A673 (cell line): ENCODE measurements at regions of chr2 and their contacts with region 1.

Region 1: GRCh38 chr2:78592491-78592890 is 433.0 kb upstream of the REG3G start:
- DNase-seq: no peak
- H3K4me3 ChIP-seq: no peak overlapping the region
- H3K27ac ChIP-seq: no peak overlapping the region
- H3K4me1 ChIP-seq: no peaks in the 10 kb centered on the region
- H3K27me3 ChIP-seq: no peaks in the 10 kb centered on the region
- CTCF ChIP-seq: no peak

Region 2: GRCh38 chr2:76946631-76947145 is 1645.8 kb before region 1 on chr2:
- CTCF ChIA-PET with region 1: no interaction called
- POLR2A ChIA-PET with region 1: interaction called, 14 read pairs
- intact Hi-C with region 1: no loop called
- DNase-seq: peak; percentile 7
- H3K4me3 ChIP-seq: no peak overlapping the region
- H3K27ac ChIP-seq: no peak overlapping the region
- H3K4me1 ChIP-seq: peaks cover 3% of the 10 kb centered on the region
- H3K27me3 ChIP-seq: no peaks in the 10 kb centered on the region
- CTCF ChIP-seq: no peak

Region 3: GRCh38 chr2:78890935-78891334 is 298.4 kb after region 1 on chr2:
- CTCF ChIA-PET with region 1: no interaction called
- POLR2A ChIA-PET with region 1: no interaction called
- intact Hi-C with region 1: no loop called
- DNase-seq: no peak
- H3K4me3 ChIP-seq: no peak overlapping the region
- H3K27ac ChIP-seq: no peak overlapping the region
- H3K4me1 ChIP-seq: no peaks in the 10 kb centered on the region
- H3K27me3 ChIP-seq: no peaks in the 10 kb centered on the region
- CTCF ChIP-seq: no peak